Psoas muscle (tissue), 8 donors: ENCODE measurements at regions of chr1 and their contacts with region 1.

Region 1: DNA sequence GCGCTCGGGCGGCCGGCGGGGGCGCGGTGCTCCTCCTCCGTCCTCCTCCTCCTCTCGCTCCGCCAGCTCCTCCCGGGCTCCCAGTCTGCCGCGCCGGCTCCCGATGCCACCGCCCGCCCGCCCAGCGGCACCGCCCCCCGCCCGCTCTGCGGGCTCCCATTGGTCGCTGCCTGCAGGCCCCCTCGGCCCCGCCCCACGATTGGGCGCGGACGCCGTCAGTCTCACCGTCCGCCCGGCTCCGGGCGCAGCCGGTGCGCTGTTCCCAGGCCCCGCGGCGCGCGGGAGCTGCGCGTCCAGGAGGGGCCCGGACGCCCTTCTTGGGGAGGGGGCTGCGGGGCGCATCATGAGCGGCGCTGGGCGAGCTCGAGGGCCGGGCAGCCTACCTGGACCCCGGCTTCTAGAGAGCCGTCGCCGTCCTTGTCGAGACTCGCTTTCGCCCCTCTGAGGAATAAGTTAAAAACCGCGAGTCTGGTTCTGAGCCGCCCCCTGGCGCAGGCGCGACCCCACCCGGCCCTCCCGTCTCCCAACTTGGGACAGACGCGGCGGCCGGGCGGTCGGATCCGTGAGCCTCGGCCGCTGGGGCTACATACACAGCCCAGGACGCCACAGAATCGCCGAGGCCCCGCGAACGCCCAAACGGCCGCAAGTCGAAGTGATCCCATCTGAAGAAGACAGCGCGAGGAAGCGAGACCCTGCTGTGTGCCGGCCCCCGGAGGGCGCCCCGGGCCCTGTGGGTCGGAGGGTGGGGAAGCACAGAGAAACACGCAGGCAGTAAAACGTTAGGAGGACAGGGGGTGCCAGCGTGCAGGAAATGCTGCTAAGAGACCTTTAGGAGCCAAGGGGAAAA is at the start of gene SIPA1L2:
- DNase-seq: peak; percentile 96 to 97
- ATAC-seq: peak; percentile 93 to 99 (median 97)
- H3K4me3 ChIP-seq: peak within 1 kb of the TSS; percentile 97
- H3K27ac ChIP-seq: peak within 1 kb of the TSS; percentile 89
- H3K4me1 ChIP-seq: peaks cover 11% of the 10 kb centered on the region
- H3K27me3 ChIP-seq: no peaks in the 10 kb centered on the region
- CTCF ChIP-seq: peak; percentile 47
- total RNA-seq, gene SIPA1L2: 4.3 to 54.4 (median 14.8) TPM

Region 2: DNA sequence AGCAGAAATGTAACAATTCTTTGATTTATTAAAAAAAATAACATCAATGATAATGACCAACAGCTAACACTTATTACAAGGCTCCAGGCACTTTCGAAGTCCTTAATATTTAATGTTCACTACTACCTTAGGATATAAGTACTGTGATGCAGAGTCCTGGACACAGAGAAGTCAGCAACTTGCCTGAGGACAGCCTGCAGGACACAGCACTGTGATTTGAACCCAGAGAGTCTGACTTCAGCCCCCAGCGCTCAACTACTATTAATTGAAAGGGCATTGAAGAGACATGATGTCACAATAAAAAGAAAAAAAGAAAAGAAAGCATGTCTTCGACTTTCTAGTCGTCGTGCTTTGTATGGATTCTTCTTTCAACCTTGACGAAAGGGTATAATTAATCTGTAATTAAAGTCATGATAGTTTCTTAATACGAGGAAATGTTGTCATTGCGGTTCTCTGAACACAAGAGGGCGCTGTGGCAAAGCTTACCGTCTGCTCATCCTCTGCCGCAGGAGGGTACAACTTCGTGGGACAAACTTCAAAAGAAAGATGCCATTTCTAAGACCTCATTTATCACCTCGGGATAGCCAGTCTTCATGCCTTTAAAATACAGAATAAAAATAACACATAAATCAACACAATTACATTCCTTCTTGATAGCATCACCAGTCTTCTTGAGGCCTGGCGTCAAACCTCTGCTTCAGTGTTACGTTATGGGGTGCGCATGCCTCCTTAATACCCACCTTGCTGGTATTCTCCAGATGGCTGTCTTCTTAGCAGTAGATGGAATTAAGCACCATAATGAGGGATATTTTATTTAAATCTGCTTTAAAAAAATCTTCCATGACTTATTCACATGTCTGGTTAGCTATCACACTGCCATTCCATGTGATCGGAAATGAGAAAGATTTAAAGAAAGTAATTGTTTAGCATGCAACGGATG is 763.6 kb before region 1 on chr1:
- intact Hi-C with region 1: loop called (anchors 2 to 10 kb)
- DNase-seq: no peak
- ATAC-seq: peak in 3 of 4 donors; percentile 43 to 68 (median 62)
- H3K4me3 ChIP-seq: no peak overlapping the region
- H3K27ac ChIP-seq: no peak overlapping the region
- H3K4me1 ChIP-seq: peaks cover 9% of the 10 kb centered on the region
- H3K27me3 ChIP-seq: no peaks in the 10 kb centered on the region
- CTCF ChIP-seq: peak; percentile 88

Region 3: DNA sequence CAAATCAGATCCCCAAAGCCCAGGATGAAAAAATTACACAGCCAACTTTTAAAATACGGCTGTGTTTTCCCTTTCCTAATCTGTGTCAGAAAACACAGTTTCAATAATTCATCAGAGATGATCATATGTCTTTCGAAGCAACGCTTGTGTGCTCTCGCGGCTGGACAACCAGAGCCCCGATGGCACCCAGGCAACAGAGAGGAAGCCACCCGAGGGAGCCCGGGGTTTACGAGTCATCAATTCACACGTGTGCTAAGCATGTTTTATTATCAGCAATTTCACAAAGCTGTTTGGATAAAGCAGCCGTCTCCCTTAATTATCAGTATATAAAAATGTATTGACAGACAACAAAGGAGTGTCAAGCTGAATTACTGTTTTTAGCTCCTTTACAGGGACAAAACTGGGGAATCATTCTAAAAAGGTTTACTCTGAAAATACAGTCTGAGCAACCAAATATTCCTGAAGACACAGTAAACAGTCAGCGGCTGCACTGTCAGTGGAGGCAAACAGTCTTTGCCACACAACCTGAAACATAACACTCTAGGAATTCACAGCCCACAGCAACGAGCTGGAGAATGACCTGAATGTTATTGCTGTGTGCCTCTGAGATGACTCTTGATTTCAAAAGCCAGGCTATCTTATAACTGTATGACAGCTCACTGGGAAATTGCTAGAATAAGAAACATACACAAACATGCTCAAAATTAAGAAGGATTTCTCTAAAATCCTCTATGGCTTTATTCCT is 201.3 kb before region 1 on chr1:
- intact Hi-C with region 1: loop called (anchors 5 kb)
- DNase-seq: no peak
- ATAC-seq: peak; percentile 94 to 98 (median 96)
- H3K4me3 ChIP-seq: peak overlapping the region; percentile 42
- H3K27ac ChIP-seq: peak overlapping the region; percentile 58
- H3K4me1 ChIP-seq: peaks cover 36% of the 10 kb centered on the region
- H3K27me3 ChIP-seq: no peaks in the 10 kb centered on the region
- CTCF ChIP-seq: no peak

Region 4: GRCh38 chr1:232553050-232553754 is 77.1 kb before region 1 on chr1:
- intact Hi-C with region 1: loop called in 1 of 2 experiments (anchors 5 kb)
- DNase-seq: peak; percentile 46 to 87
- ATAC-seq: peak; percentile 65 to 90 (median 79)
- H3K4me3 ChIP-seq: peak overlapping the region; percentile 24
- H3K27ac ChIP-seq: peak overlapping the region; percentile 67
- H3K4me1 ChIP-seq: peaks cover 58% of the 10 kb centered on the region
- H3K27me3 ChIP-seq: no peaks in the 10 kb centered on the region
- CTCF ChIP-seq: no peak

Region 5: GRCh38 chr1:232805269-232806185 is 175.3 kb after region 1 on chr1 and contains the start of gene MAP10:
- intact Hi-C with region 1: loop called in 1 of 2 experiments (anchors 10 kb)
- DNase-seq: peak; percentile 80 to 90
- ATAC-seq: peak; percentile 86 to 89 (median 87)
- H3K4me3 ChIP-seq: peak within 1 kb of the TSS; percentile 90
- H3K27ac ChIP-seq: peak within 1 kb of the TSS; percentile 93
- H3K4me1 ChIP-seq: peaks cover 28% of the 10 kb centered on the region
- H3K27me3 ChIP-seq: no peaks in the 10 kb centered on the region
- CTCF ChIP-seq: no peak
- total RNA-seq, gene MAP10: 1.3 to 4.0 (median 2.2) TPM

Region 6: GRCh38 chr1:232968965-232969364 is 338.7 kb after region 1 on chr1:
- intact Hi-C with region 1: loop called in 1 of 2 experiments (anchors 5 kb)
- DNase-seq: peak; percentile 66 to 89
- ATAC-seq: peak; percentile 92 to 95 (median 94)
- H3K4me3 ChIP-seq: no peak overlapping the region
- H3K27ac ChIP-seq: peak overlapping the region; percentile 72
- H3K4me1 ChIP-seq: peaks cover 40% of the 10 kb centered on the region
- H3K27me3 ChIP-seq: no peaks in the 10 kb centered on the region
- CTCF ChIP-seq: no peak

Region 7: GRCh38 chr1:233172227-233172626 is 542.0 kb after region 1 on chr1:
- intact Hi-C with region 1: loop called in 1 of 2 experiments (anchors 5 kb)
- DNase-seq: no peak
- ATAC-seq: peak in 2 of 4 donors; percentile 38 to 44
- H3K4me3 ChIP-seq: no peak overlapping the region
- H3K27ac ChIP-seq: no peak overlapping the region
- H3K4me1 ChIP-seq: no peaks in the 10 kb centered on the region
- H3K27me3 ChIP-seq: no peaks in the 10 kb centered on the region
- CTCF ChIP-seq: peak; percentile 41